ENCODE measurements at regions of chr11 and their contacts with region 1.

Region 1: DNA sequence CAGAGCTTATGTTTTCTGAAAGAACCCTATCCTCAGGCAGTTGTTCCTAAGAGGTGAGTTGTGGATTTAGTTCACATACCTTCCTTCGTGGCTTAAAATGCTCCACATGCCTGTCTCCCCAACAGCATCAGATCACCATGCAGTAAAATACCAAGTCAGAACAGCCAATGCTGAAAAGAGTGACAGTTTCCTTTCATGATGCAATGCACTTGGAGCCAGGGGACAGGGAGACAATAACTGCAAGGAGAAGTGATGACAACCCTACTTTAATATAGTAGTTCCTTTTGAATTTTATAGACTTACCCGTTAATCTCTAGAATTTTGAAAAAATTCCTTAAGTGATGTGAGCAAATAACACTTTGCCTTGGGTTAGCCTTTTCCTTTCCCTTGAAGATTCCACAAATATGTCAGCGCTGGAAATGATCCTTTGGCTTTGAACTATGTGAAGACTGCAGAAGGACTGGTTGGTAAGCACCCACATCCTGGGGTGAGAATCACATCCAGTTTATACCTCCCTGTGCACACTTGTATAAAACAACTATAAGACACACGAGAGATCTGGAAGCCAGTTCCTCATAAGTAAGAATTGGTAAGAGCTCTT is 71.2 kb downstream of the PIWIL4 start:
- DNase-seq: no peak
- ATAC-seq: peak in 3 of 8 donors; percentile 4 to 20 (median 10)
- H3K4me3 ChIP-seq: peak overlapping the region in 1 of 10 donors; percentile 14
- H3K27ac ChIP-seq: peak overlapping the region in 9 of 10 donors; percentile 27 to 86 (median 60)
- H3K4me1 ChIP-seq: peaks cover 0 to 28% (median 20%) of the 10 kb centered on the region in 9 donors
- H3K27me3 ChIP-seq: no peaks in the 10 kb centered on the region
- CTCF ChIP-seq: no peak

Region 2: GRCh38 chr11:94774345-94774744 is 135.9 kb after region 1 on chr11:
- intact Hi-C with region 1: loop called in 1 of 10 experiments (anchors 1 kb)
- DNase-seq: no peak
- ATAC-seq: peak in 1 of 8 donors; percentile 26
- H3K4me3 ChIP-seq: no peak overlapping the region
- H3K27ac ChIP-seq: peak overlapping the region in 2 of 10 donors; percentile 3 to 12
- H3K4me1 ChIP-seq: peaks cover 8 to 76% (median 30%) of the 10 kb centered on the region in 9 donors
- H3K27me3 ChIP-seq: peaks cover 0 to 4% (median 0%) of the 10 kb centered on the region in 7 donors
- CTCF ChIP-seq: no peak

Measured in heart right ventricle (tissue), 16 donors.